Esophagus muscularis mucosa (tissue), 4 donors: ENCODE measurements at regions of chr14 and their contacts with region 1.

Region 1: DNA sequence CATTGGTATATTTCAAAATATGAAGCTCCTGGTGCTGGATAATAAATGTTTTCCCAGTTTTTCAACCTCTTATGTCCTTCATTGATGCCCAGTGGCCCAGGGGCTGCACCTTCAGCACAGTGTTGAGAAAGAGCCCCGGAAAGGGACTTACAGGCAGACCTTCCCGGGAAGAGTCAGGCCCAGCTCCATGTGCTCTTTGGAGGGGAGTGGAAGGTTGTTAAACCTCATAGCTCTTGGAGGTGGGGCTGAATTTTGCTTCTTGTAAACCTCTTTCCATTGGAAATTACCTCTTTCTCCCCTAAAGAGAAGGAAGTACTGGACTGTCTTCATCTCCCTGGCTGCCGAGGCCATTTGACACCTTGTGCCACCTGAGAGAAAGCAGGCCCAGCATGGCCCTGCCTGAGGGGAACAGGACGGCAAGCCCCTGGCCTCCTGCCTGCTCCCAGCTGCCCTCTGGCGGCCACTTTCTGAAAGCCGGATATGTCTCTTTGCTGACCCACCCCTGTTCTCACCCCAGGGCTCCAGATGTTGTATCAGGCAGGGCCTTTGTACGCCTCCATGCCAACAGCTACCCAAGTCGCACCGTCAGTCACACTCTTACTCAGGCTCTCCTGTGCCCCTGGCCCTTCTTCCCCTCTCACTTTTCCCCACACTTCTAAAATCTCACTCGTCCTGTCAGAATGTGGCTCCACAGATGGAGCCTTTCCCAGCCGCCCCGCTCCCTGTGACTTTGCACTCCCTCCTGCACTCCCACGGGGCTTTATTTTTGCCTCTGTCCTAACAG is 43.0 kb downstream of the EVL start:
- DNase-seq: peak; percentile 94
- H3K4me3 ChIP-seq: no peak overlapping the region
- H3K27ac ChIP-seq: no peak overlapping the region
- H3K4me1 ChIP-seq: peaks cover 52 to 60% (median 55%) of the 10 kb centered on the region in 4 donors
- H3K27me3 ChIP-seq: no peaks in the 10 kb centered on the region
- CTCF ChIP-seq: peak; percentile 78 to 89 (median 82)
- EP300 ChIP-seq: no peak
- POLR2A ChIP-seq: no peak

Region 2: GRCh38 chr14:99995700-99996356 is 112.4 kb before region 1 on chr14:
- intact Hi-C with region 1: no loop called
- DNase-seq: no peak
- H3K4me3 ChIP-seq: no peak overlapping the region
- H3K27ac ChIP-seq: no peak overlapping the region
- H3K4me1 ChIP-seq: peaks cover 0 to 8% (median 2%) of the 10 kb centered on the region in 4 donors
- H3K27me3 ChIP-seq: no peaks in the 10 kb centered on the region
- CTCF ChIP-seq: peak; percentile 55 to 88 (median 60)
- EP300 ChIP-seq: no peak
- POLR2A ChIP-seq: no peak

Region 3: GRCh38 chr14:100192672-100193416 is 84.6 kb after region 1 on chr14:
- intact Hi-C with region 1: loop called (anchors 5 kb)
- DNase-seq: peak; percentile 100
- H3K4me3 ChIP-seq: peak overlapping the region; percentile 51 to 58 (median 53)
- H3K27ac ChIP-seq: peak overlapping the region; percentile 87 to 95 (median 90)
- H3K4me1 ChIP-seq: peaks cover 14 to 21% (median 19%) of the 10 kb centered on the region in 4 donors
- H3K27me3 ChIP-seq: no peaks in the 10 kb centered on the region
- CTCF ChIP-seq: peak; percentile 86 to 93 (median 87)
- EP300 ChIP-seq: no peak
- POLR2A ChIP-seq: peak; percentile 39